CD8-positive, alpha-beta T cell (primary cell): ENCODE measurements at regions of chr6 and their contacts with region 1.

Region 1: DNA sequence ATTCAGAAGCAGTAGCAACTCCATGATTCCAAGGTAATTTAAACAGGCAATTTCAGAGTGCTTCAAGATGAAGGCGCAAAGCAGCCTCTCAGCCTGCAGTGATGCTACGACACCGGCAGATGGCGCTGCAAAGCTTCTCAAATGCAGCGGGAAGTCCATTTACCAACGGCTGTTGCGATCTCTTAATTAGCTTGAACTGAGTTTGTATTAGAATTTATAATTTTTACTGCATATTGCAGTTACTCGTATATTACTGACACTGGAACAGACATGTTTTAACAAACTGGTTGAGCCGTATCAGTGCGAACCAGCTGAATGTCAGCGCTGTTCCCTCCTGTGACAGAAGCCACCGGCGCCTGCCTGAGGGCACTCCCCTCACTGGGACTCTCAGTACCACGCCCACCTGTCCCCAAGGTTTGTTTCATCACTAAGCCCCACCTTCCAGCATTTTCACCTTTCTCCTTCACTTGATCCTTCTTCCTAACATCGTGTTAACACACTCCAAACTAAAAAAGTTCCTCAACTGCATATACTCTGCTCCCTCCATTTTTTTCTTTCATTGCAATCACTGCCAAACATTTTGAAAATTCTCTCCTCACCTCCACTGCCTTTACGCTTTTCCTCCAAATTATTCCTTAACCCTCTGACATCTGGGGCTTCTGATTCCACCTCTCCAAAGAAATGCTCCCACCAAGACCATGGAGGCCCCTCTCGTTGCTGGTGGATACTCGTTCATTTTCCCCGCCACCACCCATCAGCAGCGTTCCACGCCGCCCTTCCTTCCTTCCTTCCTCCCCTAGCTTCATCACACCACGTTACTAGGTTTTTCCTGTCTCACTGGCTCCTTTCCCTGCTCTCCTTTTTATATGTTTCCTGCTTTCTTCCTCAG is 14.5 kb downstream of the GNL1 start:
- DNase-seq: peak; percentile 59 to 92 (median 82)
- ATAC-seq: peak; percentile 69
- H3K4me3 ChIP-seq: peak overlapping the region; percentile 42 to 66
- H3K4me3 Mint-ChIP-seq: peak overlapping the region; percentile 88
- H3K27ac ChIP-seq: peak overlapping the region; percentile 50 to 72
- H3K27ac Mint-ChIP-seq: peak overlapping the region; percentile 97
- H3K4me1 ChIP-seq: peaks cover 34% of the 10 kb centered on the region
- H3K4me1 Mint-ChIP-seq: peaks cover 34% of the 10 kb centered on the region
- H3K27me3 ChIP-seq: no peaks in the 10 kb centered on the region
- H3K27me3 Mint-ChIP-seq: no peaks in the 10 kb centered on the region
- CTCF ChIP-seq: peak; percentile 99

Region 2: GRCh38 chr6:30453508-30454116 is 88.1 kb before region 1 on chr6:
- CTCF ChIA-PET with region 1: interaction called, 32 read pairs
- POLR2A ChIA-PET with region 1: interaction called, 5 read pairs
- intact Hi-C with region 1: loop called in 1 of 2 experiments (anchors 1 kb)
- DNase-seq: peak; percentile 71 to 93 (median 87)
- ATAC-seq: peak; percentile 83
- H3K4me3 ChIP-seq: peak overlapping the region in 1 of 2 experiments; percentile 41
- H3K4me3 Mint-ChIP-seq: peak overlapping the region; percentile 49
- H3K27ac ChIP-seq: no peak overlapping the region
- H3K27ac Mint-ChIP-seq: no peak overlapping the region
- H3K4me1 ChIP-seq: peaks cover 42% of the 10 kb centered on the region
- H3K4me1 Mint-ChIP-seq: peaks cover 41% of the 10 kb centered on the region
- H3K27me3 ChIP-seq: peaks cover 38 to 64% of the 10 kb centered on the region in 2 experiments
- H3K27me3 Mint-ChIP-seq: peaks cover 68% of the 10 kb centered on the region
- CTCF ChIP-seq: peak; percentile 63

Region 3: DNA sequence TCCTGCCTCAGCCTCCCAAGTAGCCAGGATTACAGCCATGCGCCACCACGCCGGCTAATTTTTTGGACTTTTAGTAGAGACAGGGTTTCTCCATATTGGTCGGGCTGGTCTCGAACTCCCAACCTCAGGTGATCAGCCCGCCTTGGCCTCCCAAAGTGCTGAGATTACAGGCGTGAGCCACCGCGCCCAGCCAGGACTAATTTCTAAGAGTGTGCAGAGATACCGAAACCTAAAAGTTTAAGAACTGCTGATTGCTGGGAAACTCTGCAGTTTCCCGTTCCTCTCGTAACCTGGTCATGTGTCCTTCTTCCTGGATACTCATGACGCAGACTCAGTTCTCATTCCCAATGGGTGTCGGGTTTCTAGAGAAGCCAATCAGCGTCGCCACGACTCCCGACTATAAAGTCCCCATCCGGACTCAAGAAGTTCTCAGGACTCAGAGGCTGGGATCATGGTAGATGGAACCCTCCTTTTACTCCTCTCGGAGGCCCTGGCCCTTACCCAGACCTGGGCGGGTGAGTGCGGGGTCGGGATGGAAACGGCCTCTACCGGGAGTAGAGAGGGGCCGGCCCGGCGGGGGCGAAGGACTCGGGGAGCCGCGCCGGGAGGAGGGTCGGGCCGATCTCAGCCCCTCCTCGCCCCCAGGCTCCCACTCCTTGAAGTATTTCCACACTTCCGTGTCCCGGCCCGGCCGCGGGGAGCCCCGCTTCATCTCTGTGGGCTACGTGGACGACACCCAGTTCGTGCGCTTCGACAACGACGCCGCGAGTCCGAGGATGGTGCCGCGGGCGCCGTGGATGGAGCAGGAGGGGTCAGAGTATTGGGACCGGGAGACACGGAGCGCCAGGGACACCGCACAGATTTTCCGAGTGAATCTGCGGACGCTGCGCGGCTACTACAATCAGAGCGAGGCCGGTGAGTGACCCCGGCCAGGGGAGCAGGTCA is 52.4 kb before region 1 on chr6 and contains the start of gene HLA-E:
- CTCF ChIA-PET with region 1: interaction called, 437 read pairs
- POLR2A ChIA-PET with region 1: interaction called, 113 read pairs
- intact Hi-C with region 1: no loop called
- DNase-seq: peak; percentile 75 to 100 (median 87)
- ATAC-seq: peak; percentile 80
- H3K4me3 ChIP-seq: peak within 1 kb of the TSS; percentile 93 to 99
- H3K4me3 Mint-ChIP-seq: peak within 1 kb of the TSS; percentile 99
- H3K27ac ChIP-seq: peak within 1 kb of the TSS; percentile 94 to 96
- H3K27ac Mint-ChIP-seq: peak within 1 kb of the TSS; percentile 98
- H3K4me1 ChIP-seq: peaks cover 31% of the 10 kb centered on the region
- H3K4me1 Mint-ChIP-seq: peaks cover 52% of the 10 kb centered on the region
- H3K27me3 ChIP-seq: no peaks in the 10 kb centered on the region
- H3K27me3 Mint-ChIP-seq: no peaks in the 10 kb centered on the region
- CTCF ChIP-seq: no peak
- total RNA-seq, gene HLA-E: 1,266 to 1,281 TPM

Region 4: GRCh38 chr6:30515932-30516753 is 25.6 kb before region 1 on chr6:
- CTCF ChIA-PET with region 1: interaction called, 219 read pairs
- POLR2A ChIA-PET with region 1: interaction called, 12 read pairs
- intact Hi-C with region 1: loop called in 1 of 2 experiments (anchors 1 kb)
- DNase-seq: peak; percentile 77 to 98 (median 90)
- ATAC-seq: peak; percentile 83
- H3K4me3 ChIP-seq: peak overlapping the region; percentile 36 to 43
- H3K4me3 Mint-ChIP-seq: peak overlapping the region; percentile 83
- H3K27ac ChIP-seq: peak overlapping the region; percentile 82 to 99
- H3K27ac Mint-ChIP-seq: peak overlapping the region; percentile 99
- H3K4me1 ChIP-seq: peaks cover 61% of the 10 kb centered on the region
- H3K4me1 Mint-ChIP-seq: peaks cover 63% of the 10 kb centered on the region
- H3K27me3 ChIP-seq: no peaks in the 10 kb centered on the region
- H3K27me3 Mint-ChIP-seq: no peaks in the 10 kb centered on the region
- CTCF ChIP-seq: no peak

Region 5: DNA sequence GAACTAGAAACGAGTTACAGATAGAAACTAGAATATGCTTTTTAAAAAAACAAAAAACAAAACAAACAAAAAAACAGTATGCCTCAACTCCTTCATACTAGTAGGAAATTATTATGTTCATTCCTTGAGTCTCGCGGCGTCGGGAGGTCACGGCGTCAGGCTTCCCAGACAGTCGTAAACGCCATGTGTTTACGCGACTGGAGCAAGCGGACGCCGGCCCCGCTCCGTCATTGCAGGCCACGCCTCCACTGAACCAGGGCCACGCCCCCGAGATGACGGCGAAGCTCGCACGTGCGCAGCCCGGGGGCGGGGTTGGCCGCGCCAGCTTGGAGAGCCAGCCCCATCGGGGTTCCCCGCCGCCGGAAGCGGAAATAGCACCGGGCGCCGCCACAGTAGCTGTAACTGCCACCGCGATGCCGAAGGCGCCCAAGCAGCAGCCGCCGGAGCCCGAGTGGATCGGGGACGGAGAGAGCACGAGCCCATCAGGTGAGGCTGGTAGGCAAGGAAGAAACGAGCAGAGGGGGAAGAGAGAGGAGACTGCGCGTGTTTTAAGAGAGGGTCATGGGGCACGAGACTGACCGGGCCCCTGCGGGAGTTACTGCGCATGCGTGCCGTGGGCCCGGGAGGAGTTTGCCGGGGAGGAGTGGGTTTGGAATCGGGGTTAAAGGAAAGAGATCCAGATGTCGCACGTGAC is 29.5 kb after region 1 on chr6 and contains the start of gene ABCF1:
- CTCF ChIA-PET with region 1: interaction called, 37 read pairs
- POLR2A ChIA-PET with region 1: interaction called, 4 read pairs
- intact Hi-C with region 1: loop called in 1 of 2 experiments (anchors 1 kb)
- DNase-seq: peak; percentile 99 to 100 (median 100)
- ATAC-seq: peak; percentile 96
- H3K4me3 ChIP-seq: peak within 1 kb of the TSS; percentile 64 to 86
- H3K4me3 Mint-ChIP-seq: peak within 1 kb of the TSS; percentile 98
- H3K27ac ChIP-seq: peak within 1 kb of the TSS; percentile 90 to 98
- H3K27ac Mint-ChIP-seq: peak within 1 kb of the TSS; percentile 99
- H3K4me1 ChIP-seq: peaks cover 54% of the 10 kb centered on the region
- H3K4me1 Mint-ChIP-seq: peaks cover 69% of the 10 kb centered on the region
- H3K27me3 ChIP-seq: no peaks in the 10 kb centered on the region
- H3K27me3 Mint-ChIP-seq: no peaks in the 10 kb centered on the region
- CTCF ChIP-seq: no peak
- total RNA-seq, gene ABCF1: 121 to 130 TPM

Region 6: GRCh38 chr6:30590994-30591393 is 49.2 kb after region 1 on chr6:
- CTCF ChIA-PET with region 1: interaction called, 237 read pairs
- POLR2A ChIA-PET with region 1: interaction called, 44 read pairs
- intact Hi-C with region 1: no loop called
- DNase-seq: no peak
- ATAC-seq: no peak
- H3K4me3 ChIP-seq: no peak overlapping the region
- H3K4me3 Mint-ChIP-seq: no peak overlapping the region
- H3K27ac ChIP-seq: no peak overlapping the region
- H3K27ac Mint-ChIP-seq: no peak overlapping the region
- H3K4me1 ChIP-seq: no peaks in the 10 kb centered on the region
- H3K4me1 Mint-ChIP-seq: peaks cover 10% of the 10 kb centered on the region
- H3K27me3 ChIP-seq: no peaks in the 10 kb centered on the region
- H3K27me3 Mint-ChIP-seq: no peaks in the 10 kb centered on the region
- CTCF ChIP-seq: no peak

Region 7: GRCh38 chr6:30717042-30717844 is 175.5 kb after region 1 on chr6 and contains the start of gene MDC1:
- CTCF ChIA-PET with region 1: interaction called, 43 read pairs
- POLR2A ChIA-PET with region 1: interaction called, 3 read pairs
- intact Hi-C with region 1: loop called (anchors 2 kb)
- DNase-seq: peak; percentile 97 to 100 (median 98)
- ATAC-seq: peak; percentile 72
- H3K4me3 ChIP-seq: peak within 1 kb of the TSS; percentile 69 to 70
- H3K4me3 Mint-ChIP-seq: peak within 1 kb of the TSS; percentile 92
- H3K27ac ChIP-seq: peak within 1 kb of the TSS; percentile 83 to 90
- H3K27ac Mint-ChIP-seq: peak within 1 kb of the TSS; percentile 99
- H3K4me1 ChIP-seq: peaks cover 23% of the 10 kb centered on the region
- H3K4me1 Mint-ChIP-seq: peaks cover 51% of the 10 kb centered on the region
- H3K27me3 ChIP-seq: no peaks in the 10 kb centered on the region
- H3K27me3 Mint-ChIP-seq: no peaks in the 10 kb centered on the region
- CTCF ChIP-seq: peak; percentile 47
- total RNA-seq, gene MDC1: 38.9 to 48.8 TPM

Region 8: GRCh38 chr6:30914076-30914853 is 372.5 kb after region 1 on chr6 and contains the start of gene VARS2:
- CTCF ChIA-PET with region 1: no interaction called
- POLR2A ChIA-PET with region 1: no interaction called
- intact Hi-C with region 1: no loop called
- DNase-seq: peak; percentile 66 to 92 (median 82)
- ATAC-seq: peak; percentile 96
- H3K4me3 ChIP-seq: peak within 1 kb of the TSS; percentile 61 to 92
- H3K4me3 Mint-ChIP-seq: peak within 1 kb of the TSS; percentile 93
- H3K27ac ChIP-seq: peak within 1 kb of the TSS; percentile 48 to 65
- H3K27ac Mint-ChIP-seq: peak within 1 kb of the TSS; percentile 88
- H3K4me1 ChIP-seq: peaks cover 15% of the 10 kb centered on the region
- H3K4me1 Mint-ChIP-seq: peaks cover 29% of the 10 kb centered on the region
- H3K27me3 ChIP-seq: no peaks in the 10 kb centered on the region
- H3K27me3 Mint-ChIP-seq: no peaks in the 10 kb centered on the region
- CTCF ChIP-seq: no peak
- total RNA-seq, gene VARS2: 19.5 to 20.6 TPM

Region 9: GRCh38 chr6:32327103-32327502 is 1785.3 kb after region 1 on chr6:
- CTCF ChIA-PET with region 1: no interaction called
- POLR2A ChIA-PET with region 1: no interaction called
- intact Hi-C with region 1: no loop called
- DNase-seq: no peak
- ATAC-seq: no peak
- H3K4me3 ChIP-seq: no peak overlapping the region
- H3K4me3 Mint-ChIP-seq: no peak overlapping the region
- H3K27ac ChIP-seq: no peak overlapping the region
- H3K27ac Mint-ChIP-seq: no peak overlapping the region
- H3K4me1 ChIP-seq: no peaks in the 10 kb centered on the region
- H3K4me1 Mint-ChIP-seq: no peaks in the 10 kb centered on the region
- H3K27me3 ChIP-seq: no peaks in the 10 kb centered on the region
- H3K27me3 Mint-ChIP-seq: peaks cover 8% of the 10 kb centered on the region
- CTCF ChIP-seq: no peak